Mammary epithelial cell (primary cell): ENCODE measurements at regions of chr2 and their contacts with region 1.

Region 1: DNA sequence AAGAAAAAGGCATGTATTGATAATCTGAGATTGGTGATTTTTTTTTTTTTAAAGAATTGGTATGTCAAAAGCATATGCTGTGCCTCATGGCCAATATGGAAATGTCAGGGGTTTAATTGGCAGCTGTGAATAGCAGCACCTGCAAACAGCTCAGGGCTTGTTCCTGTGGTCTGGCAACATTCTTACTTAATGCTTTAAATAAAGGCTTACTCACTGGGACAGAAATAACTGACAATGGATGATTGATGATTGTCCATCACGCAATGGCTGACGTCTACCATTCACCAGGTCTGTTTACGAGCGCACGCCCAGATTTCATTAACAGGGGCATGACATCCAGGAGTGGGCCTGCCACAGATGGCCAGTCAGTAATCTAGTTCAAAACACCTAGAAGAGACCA is 66.7 kb downstream of the ETAA1 start:
- DNase-seq: peak; percentile 99
- H3K4me3 ChIP-seq: no peak overlapping the region
- H3K27ac ChIP-seq: peak overlapping the region; percentile 90
- H3K4me1 ChIP-seq: peaks cover 36% of the 10 kb centered on the region
- H3K27me3 ChIP-seq: no peaks in the 10 kb centered on the region
- CTCF ChIP-seq: no peak

Region 2: GRCh38 chr2:67259581-67260342 is 204.0 kb before region 1 on chr2:
- CTCF ChIA-PET with region 1: no interaction called
- dilution Hi-C with region 1: no loop called
- in situ Hi-C with region 1: loop called in 1 of 2 experiments (anchors 25 kb)
- intact Hi-C with region 1: loop called (anchors 5 kb)
- DNase-seq: peak; percentile 91
- H3K4me3 ChIP-seq: no peak overlapping the region
- H3K27ac ChIP-seq: peak overlapping the region; percentile 81
- H3K4me1 ChIP-seq: peaks cover 40% of the 10 kb centered on the region
- H3K27me3 ChIP-seq: no peaks in the 10 kb centered on the region
- CTCF ChIP-seq: no peak

Region 3: DNA sequence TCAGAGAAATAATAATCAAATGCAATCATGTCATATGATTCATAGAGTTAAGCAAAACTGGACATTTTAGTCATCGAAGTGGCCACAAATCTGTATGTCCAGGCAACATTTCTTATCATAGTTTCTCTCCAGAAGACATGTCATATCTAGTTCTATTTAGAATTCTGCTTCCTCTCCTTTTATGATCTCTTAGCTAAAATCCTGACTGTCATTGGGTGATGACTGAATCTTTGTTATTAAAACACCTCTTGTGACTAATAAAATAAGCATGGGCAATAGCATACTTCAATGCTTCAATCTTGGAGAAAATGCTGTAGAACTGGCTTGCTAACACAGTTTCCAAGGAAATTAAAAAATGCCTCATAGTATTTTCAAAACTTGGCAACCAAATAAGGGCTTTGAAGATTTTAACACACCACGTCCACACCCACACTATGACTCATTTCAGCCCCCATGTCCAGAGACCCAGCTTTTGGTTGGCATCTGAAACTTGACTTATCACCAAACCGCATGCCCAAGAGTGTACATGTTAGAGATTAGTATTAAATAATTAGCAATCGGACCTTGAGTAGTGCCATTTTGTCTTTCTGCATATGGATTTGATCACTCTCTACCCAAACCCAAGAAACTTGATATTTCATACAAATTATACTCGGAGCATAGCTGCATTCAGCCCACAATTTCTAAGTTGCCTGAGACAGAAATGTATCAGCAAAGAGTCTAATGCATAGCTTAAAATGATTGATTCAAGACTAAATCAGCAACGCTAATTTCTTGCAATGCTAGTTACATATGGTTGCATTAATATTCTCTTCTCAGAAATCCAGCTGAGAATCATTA is 173.1 kb before region 1 on chr2:
- CTCF ChIA-PET with region 1: no interaction called
- dilution Hi-C with region 1: no loop called
- in situ Hi-C with region 1: no loop called
- intact Hi-C with region 1: loop called (anchors 1 kb)
- DNase-seq: peak; percentile 98
- H3K4me3 ChIP-seq: no peak overlapping the region
- H3K27ac ChIP-seq: peak overlapping the region; percentile 97
- H3K4me1 ChIP-seq: peaks cover 23% of the 10 kb centered on the region
- H3K27me3 ChIP-seq: no peaks in the 10 kb centered on the region
- CTCF ChIP-seq: no peak

Region 4: GRCh38 chr2:67346718-67347407 is 116.9 kb before region 1 on chr2:
- CTCF ChIA-PET with region 1: no interaction called
- dilution Hi-C with region 1: no loop called
- in situ Hi-C with region 1: no loop called
- intact Hi-C with region 1: loop called (anchors 2 kb)
- DNase-seq: peak; percentile 75
- H3K4me3 ChIP-seq: no peak overlapping the region
- H3K27ac ChIP-seq: peak overlapping the region; percentile 29
- H3K4me1 ChIP-seq: peaks cover 12% of the 10 kb centered on the region
- H3K27me3 ChIP-seq: no peaks in the 10 kb centered on the region
- CTCF ChIP-seq: no peak

Region 5: GRCh38 chr2:67397143-67397986 is 66.4 kb before region 1 on chr2 and contains the start of gene ETAA1:
- CTCF ChIA-PET with region 1: no interaction called
- dilution Hi-C with region 1: no loop called
- in situ Hi-C with region 1: no loop called
- intact Hi-C with region 1: loop called (anchors 1 kb)
- DNase-seq: peak; percentile 86
- H3K4me3 ChIP-seq: peak within 1 kb of the TSS; percentile 90 to 95 (median 91)
- H3K27ac ChIP-seq: peak within 1 kb of the TSS; percentile 89
- H3K4me1 ChIP-seq: peaks cover 22% of the 10 kb centered on the region
- H3K27me3 ChIP-seq: no peaks in the 10 kb centered on the region
- CTCF ChIP-seq: no peak
- total RNA-seq, gene ETAA1: 14.0 to 14.5 TPM

Region 6: DNA sequence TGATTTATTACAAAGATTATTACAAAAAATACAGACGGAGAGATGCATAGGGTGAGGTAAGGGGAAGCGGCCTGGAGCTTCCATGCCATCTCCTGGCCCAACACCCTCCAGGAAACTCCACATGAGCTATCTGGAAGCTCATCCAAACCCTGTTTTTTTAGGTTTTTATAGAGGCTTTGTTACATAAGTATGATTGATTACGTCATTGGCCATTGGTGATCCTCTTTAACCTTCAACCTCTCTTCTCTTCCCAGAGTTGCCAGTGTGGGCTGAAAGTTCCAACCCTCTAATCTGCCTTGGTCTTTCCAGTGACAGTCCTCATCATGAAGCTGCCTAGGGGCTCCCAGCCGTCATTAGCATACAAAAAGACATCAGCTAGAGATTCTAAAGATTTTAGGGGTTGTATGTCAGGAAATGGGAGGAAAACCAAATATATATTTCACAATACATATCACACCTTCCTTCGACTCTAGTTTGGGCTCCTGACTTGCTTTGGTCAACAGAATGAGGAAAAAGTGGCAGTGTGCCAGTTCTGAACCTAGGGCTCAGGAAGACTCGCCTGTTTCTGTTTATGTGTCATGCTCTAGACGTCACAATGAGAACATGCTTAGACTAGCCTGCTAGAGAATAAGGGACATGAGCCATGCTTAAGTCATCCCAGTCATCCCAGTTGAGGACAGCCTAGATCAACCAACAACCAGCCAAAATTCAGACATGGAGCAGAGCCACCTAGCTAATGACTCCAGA is 12.6 kb before region 1 on chr2:
- CTCF ChIA-PET with region 1: interaction called, 8 read pairs
- dilution Hi-C with region 1: no loop called
- in situ Hi-C with region 1: no loop called
- intact Hi-C with region 1: loop called (anchors 1 kb)
- DNase-seq: peak; percentile 100
- H3K4me3 ChIP-seq: no peak overlapping the region
- H3K27ac ChIP-seq: peak overlapping the region; percentile 95
- H3K4me1 ChIP-seq: peaks cover 61% of the 10 kb centered on the region
- H3K27me3 ChIP-seq: no peaks in the 10 kb centered on the region
- CTCF ChIP-seq: no peak